ENCODE measurements at regions of chr11 and their contacts with region 1.

Region 1: DNA sequence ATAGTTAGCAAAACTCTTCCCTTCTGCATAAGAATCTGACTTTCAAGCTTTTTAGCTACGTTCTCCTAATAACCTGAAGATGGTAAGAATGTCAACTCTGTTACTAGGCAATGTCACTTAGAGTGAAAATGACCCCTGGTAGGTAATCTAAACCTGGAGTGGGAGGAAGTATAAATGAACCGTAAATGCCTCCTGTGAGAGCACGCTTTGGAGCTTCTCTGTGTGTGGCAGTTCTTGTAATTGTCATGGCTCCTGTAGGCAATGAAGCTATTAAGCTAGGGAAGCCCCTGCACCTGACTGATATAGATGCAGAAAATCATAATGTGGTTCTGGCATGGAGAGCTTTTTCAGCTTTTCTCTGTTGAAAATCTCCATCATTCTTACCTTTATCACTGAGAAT is 29.4 kb downstream of the CALCA start:
- DNase-seq: no peak
- ATAC-seq: no peak
- H3K4me3 ChIP-seq: no peak overlapping the region
- H3K4me3 Mint-ChIP-seq: no peak overlapping the region
- H3K27ac ChIP-seq: no peak overlapping the region
- H3K27ac Mint-ChIP-seq: no peak overlapping the region
- H3K4me1 ChIP-seq: no peaks in the 10 kb centered on the region
- H3K4me1 Mint-ChIP-seq: no peaks in the 10 kb centered on the region
- H3K27me3 ChIP-seq: no peaks in the 10 kb centered on the region
- H3K27me3 Mint-ChIP-seq: peaks cover 2% of the 10 kb centered on the region
- CTCF ChIP-seq: no peak

Region 2: DNA sequence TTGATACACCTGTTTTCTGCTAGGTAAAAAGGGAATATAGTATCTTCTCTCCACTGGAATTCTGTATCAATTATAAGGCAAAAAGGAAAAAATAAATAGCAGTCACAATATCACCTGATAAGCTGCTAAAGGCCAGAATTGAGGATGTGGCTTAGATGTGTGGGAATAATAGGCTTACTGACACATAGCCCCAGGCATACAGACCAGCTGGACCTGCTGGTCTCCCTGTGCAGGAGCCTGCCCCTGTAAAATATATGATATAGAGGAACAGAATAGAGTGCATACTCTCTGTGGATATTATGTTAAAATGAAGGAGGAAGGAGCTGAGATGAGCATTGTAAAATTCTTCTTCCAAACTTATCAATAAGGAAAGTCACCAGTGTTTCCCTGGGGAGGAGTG is 336.0 kb before region 1 on chr11:
- CTCF ChIA-PET with region 1: no interaction called
- POLR2A ChIA-PET with region 1: no interaction called
- intact Hi-C with region 1: no loop called
- DNase-seq: no peak
- ATAC-seq: no peak
- H3K4me3 ChIP-seq: no peak overlapping the region
- H3K4me3 Mint-ChIP-seq: no peak overlapping the region
- H3K27ac ChIP-seq: no peak overlapping the region
- H3K27ac Mint-ChIP-seq: no peak overlapping the region
- H3K4me1 ChIP-seq: peaks cover 3% of the 10 kb centered on the region
- H3K4me1 Mint-ChIP-seq: peaks cover 25% of the 10 kb centered on the region
- H3K27me3 ChIP-seq: no peaks in the 10 kb centered on the region
- H3K27me3 Mint-ChIP-seq: no peaks in the 10 kb centered on the region
- CTCF ChIP-seq: no peak

Region 3: GRCh38 chr11:14930369-14930768 is 12.4 kb before region 1 on chr11:
- CTCF ChIA-PET with region 1: no interaction called
- POLR2A ChIA-PET with region 1: no interaction called
- intact Hi-C with region 1: loop called in 1 of 2 experiments (anchors 1 kb)
- DNase-seq: no peak
- ATAC-seq: no peak
- H3K4me3 ChIP-seq: no peak overlapping the region
- H3K4me3 Mint-ChIP-seq: no peak overlapping the region
- H3K27ac ChIP-seq: no peak overlapping the region
- H3K27ac Mint-ChIP-seq: no peak overlapping the region
- H3K4me1 ChIP-seq: no peaks in the 10 kb centered on the region
- H3K4me1 Mint-ChIP-seq: no peaks in the 10 kb centered on the region
- H3K27me3 ChIP-seq: no peaks in the 10 kb centered on the region
- H3K27me3 Mint-ChIP-seq: no peaks in the 10 kb centered on the region
- CTCF ChIP-seq: no peak